Tibial artery (tissue), 4 donors: ENCODE measurements at regions of chr3 and their contacts with region 1.

Region 1: GRCh38 chr3:127574880-127575878 is 15.4 kb downstream of the TPRA1 start:
- DNase-seq: peak; percentile 90 to 91
- H3K4me3 ChIP-seq: no peak overlapping the region
- H3K27ac ChIP-seq: peak overlapping the region in 1 of 2 donors; percentile 36
- H3K4me1 ChIP-seq: peaks cover 0 to 8% (median 6%) of the 10 kb centered on the region in 4 donors
- H3K27me3 ChIP-seq: no peaks in the 10 kb centered on the region
- CTCF ChIP-seq: peak; percentile 92 to 100

Region 2: DNA sequence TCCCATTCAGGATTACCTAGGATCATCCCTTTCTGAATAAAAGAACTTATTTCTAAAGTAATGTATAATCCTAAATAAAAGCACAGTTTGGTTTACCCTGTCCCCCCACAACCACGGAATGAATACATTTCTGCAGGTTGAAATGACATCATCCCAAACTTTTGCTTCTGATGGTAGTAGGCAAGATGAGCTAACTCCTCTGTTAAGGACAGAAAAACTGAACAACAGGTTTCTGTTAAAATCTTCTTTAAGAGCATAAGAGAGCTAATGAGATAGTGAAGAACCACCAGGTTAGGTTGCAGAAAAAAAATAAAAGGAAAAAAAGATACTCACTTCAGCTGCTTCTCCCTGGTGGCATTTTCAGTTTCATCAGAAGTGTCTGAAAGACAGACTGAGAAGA is 75.8 kb before region 1 on chr3:
- intact Hi-C with region 1: no loop called
- DNase-seq: no peak
- H3K4me3 ChIP-seq: no peak overlapping the region
- H3K27ac ChIP-seq: no peak overlapping the region
- H3K4me1 ChIP-seq: no peaks in the 10 kb centered on the region
- H3K27me3 ChIP-seq: peaks cover 0 to 5% of the 10 kb centered on the region in 2 donors
- CTCF ChIP-seq: no peak

Region 3: DNA sequence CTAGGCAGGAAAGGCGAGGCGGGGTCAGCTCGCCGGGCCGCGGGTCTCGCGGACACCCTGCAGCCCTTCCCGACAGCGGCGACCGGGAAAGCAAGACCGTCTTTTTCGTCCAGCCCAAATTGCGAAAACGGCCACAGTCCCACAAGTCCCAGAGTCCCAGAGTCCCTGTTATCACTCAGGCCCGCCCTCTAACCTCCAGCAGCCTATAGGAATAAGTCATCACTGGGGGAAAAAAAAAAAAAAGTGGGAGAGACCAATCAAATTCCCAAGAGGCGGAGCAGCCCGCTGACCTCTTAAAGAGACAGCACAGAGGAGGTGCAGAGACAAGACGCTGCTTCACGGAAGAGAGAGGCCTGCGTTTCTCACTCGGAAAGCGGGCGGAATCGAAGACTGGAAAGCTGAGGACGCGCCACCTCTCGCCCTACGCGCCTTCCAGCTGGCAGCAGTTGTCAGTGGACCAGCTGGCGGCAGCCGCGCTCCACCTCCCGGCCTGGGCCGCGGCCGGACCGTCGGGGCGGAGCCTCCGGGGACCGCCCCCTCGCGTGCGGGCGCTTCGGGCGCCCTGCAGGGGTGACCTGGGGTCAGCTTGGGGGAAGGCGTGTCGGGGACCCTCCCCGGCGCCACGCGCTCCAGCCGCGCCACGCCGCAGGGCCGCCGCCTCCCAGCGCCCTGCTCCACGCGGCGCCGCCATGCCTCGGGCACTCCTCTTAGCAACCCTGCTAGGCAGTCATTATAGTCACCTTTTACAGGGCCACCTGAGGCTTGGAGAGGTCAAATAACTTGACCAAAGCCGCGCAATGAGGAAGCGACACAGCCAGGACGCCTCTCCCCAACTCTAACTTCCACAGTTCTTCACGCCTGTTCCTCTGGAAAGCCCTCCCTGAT is 15.7 kb after region 1 on chr3 and contains the start of gene TPRA1:
- intact Hi-C with region 1: loop called (anchors 2 kb)
- DNase-seq: peak; percentile 96
- H3K4me3 ChIP-seq: peak within 1 kb of the TSS; percentile 88 to 98
- H3K27ac ChIP-seq: peak within 1 kb of the TSS; percentile 94 to 97
- H3K4me1 ChIP-seq: peaks cover 0 to 46% (median 32%) of the 10 kb centered on the region in 4 donors
- H3K27me3 ChIP-seq: no peaks in the 10 kb centered on the region
- CTCF ChIP-seq: peak in 1 of 2 experiments; percentile 13

Region 4: GRCh38 chr3:127831723-127832172 is 256.6 kb after region 1 on chr3:
- intact Hi-C with region 1: loop called (anchors 10 kb)
- DNase-seq: no peak
- H3K4me3 ChIP-seq: no peak overlapping the region
- H3K27ac ChIP-seq: no peak overlapping the region
- H3K4me1 ChIP-seq: no peaks in the 10 kb centered on the region
- H3K27me3 ChIP-seq: no peaks in the 10 kb centered on the region
- CTCF ChIP-seq: peak; percentile 19 to 23

Region 5: DNA sequence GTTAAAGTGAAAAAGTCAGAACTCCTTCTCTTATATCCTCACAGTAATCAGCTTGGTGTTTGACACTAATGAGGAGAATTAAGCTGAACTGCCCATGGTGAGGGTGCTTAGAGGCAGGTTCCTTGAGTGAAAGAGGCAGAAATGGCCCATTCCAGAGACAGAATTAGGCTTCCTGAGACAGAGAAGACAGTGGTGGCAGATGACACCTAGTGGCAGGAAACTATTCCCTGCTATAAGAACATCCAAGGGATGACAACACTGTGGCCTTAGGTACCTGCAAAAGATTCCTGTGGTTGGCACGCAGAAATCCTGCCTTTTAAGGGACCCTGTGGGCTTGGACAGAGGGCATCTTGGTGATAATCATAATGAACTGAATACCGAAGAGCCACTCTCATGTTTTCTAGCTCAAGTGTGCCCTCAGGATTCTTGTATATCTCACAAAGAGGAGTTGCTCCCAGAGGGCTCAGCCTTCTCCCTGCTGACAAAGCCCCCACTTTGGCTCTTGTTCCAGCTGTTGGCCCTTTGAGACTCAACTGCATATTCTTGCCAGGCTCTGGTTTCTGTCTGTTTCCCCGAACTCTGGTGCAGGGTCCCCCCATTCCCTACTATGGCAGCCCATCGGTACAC is 395.9 kb after region 1 on chr3:
- intact Hi-C with region 1: loop called (anchors 5 kb)
- DNase-seq: peak in 1 of 2 donors; percentile 31
- H3K4me3 ChIP-seq: no peak overlapping the region
- H3K27ac ChIP-seq: no peak overlapping the region
- H3K4me1 ChIP-seq: no peaks in the 10 kb centered on the region
- H3K27me3 ChIP-seq: no peaks in the 10 kb centered on the region
- CTCF ChIP-seq: peak; percentile 66 to 70

Region 6: GRCh38 chr3:128236657-128237056 is 661.5 kb after region 1 on chr3:
- intact Hi-C with region 1: no loop called
- DNase-seq: no peak
- H3K4me3 ChIP-seq: no peak overlapping the region
- H3K27ac ChIP-seq: no peak overlapping the region
- H3K4me1 ChIP-seq: peaks cover 0 to 13% (median 7%) of the 10 kb centered on the region in 4 donors
- H3K27me3 ChIP-seq: no peaks in the 10 kb centered on the region
- CTCF ChIP-seq: no peak